OCI-LY7 (cell line): ENCODE measurements at regions of chr1 and their contacts with region 1.

Region 1: DNA sequence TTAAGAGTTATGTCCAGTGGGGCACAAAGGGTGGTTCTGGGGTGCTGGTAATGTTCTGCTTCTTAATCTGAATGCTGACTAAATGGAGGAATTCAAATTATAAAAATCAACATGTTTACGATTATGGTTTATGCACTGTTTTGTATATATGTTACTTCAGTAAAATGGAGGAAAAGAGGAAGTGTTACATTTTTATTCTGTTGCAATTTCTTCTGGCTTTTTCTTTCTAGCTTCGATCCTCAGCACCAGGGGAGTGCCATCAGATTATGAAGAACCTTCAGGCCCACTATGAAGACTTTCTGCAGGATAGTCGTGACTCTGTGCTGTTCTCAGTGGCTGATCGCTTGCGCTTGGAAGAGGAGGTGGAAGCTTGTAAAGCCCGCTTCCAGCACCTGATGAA is 105.5 kb downstream of the MACF1 start:
- DNase-seq: no peak
- H3K4me3 ChIP-seq: no peak overlapping the region
- H3K27ac ChIP-seq: no peak overlapping the region
- H3K4me1 ChIP-seq: peaks cover 7% of the 10 kb centered on the region
- CTCF ChIP-seq: no peak

Region 2: DNA sequence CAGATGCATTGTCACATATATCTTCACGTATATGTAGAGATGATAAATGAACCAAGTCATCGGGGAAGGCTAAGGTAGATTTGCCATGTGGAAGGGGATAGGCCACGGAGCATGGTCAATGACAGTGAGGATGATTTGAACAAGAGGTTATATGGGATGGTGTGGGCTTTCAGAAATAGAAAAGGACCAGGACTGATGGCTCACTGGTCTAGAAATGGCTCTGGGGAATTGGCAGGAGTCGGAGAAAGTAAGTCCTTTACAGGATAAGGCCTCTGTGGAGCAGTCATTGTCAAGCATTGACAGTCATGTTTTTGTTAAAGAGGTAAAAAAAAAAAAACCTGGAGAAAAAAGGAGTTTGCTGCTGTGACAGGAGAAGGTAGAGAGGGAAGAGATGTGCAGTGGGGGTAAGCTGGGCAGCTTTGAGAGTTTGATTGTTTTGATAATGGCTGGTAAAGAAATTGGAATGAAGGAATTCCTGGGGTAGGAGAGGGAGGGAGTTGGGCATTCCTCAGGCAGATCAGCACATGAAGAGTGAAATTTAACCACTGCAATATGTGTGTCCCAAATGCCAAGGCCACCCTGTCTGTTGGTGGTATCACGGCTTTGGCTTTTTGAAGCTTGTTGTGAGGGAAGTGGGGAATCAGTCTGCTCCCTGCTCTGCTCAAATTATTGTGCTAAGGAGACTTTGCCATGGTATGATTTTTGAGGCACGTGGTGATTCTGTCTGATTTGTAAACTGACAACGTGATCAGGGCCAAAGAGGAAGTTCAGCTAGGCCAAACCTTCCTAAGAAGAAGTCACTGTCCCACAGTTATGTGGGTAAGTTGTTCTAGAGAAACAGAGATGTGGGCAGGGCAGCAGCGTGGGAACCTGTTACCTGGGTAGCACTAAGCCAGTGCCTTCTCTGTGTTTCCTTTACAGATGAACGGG is 79.5 kb before region 1 on chr1:
- CTCF ChIA-PET with region 1: no interaction called
- POLR2A ChIA-PET with region 1: no interaction called
- intact Hi-C with region 1: no loop called
- DNase-seq: peak; percentile 29
- H3K4me3 ChIP-seq: no peak overlapping the region
- H3K27ac ChIP-seq: peak overlapping the region; percentile 21
- H3K4me1 ChIP-seq: peaks cover 19% of the 10 kb centered on the region
- CTCF ChIP-seq: no peak

Region 3: DNA sequence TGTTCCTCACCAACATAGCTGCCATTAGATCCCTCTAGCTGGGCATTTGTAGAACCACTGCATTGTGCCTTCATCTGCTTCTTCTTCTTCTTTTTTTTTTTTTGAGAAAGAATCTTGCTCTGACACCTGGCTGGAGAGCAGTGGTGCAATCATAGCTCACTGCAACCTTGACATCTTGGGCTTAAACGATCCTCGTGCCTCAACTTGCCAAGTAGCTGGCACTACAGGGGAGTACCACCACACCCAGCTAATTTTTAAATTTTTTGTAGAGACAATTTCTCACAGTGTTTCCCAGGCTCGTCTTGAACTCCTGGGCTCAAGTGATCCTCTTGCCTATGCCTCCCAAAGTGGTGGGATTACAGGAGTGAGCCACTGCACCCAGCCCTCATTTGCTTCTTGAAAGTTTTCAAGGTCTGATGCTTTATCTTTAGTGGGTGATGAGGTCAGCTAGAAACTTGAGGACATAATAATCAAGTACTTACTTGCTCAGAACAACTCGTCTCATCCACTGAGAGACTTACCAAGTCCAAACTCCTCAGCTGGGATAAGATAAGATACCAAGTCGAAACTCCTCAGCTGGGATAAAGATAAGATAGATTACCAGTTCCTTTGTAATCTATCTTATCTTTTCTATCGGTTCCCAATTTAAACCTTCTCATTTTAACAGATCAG is 34.0 kb before region 1 on chr1:
- CTCF ChIA-PET with region 1: no interaction called
- POLR2A ChIA-PET with region 1: no interaction called
- intact Hi-C with region 1: loop called (anchors 5 kb)
- DNase-seq: no peak
- H3K4me3 ChIP-seq: no peak overlapping the region
- H3K27ac ChIP-seq: no peak overlapping the region
- H3K4me1 ChIP-seq: peaks cover 26% of the 10 kb centered on the region
- CTCF ChIP-seq: no peak

Region 4: DNA sequence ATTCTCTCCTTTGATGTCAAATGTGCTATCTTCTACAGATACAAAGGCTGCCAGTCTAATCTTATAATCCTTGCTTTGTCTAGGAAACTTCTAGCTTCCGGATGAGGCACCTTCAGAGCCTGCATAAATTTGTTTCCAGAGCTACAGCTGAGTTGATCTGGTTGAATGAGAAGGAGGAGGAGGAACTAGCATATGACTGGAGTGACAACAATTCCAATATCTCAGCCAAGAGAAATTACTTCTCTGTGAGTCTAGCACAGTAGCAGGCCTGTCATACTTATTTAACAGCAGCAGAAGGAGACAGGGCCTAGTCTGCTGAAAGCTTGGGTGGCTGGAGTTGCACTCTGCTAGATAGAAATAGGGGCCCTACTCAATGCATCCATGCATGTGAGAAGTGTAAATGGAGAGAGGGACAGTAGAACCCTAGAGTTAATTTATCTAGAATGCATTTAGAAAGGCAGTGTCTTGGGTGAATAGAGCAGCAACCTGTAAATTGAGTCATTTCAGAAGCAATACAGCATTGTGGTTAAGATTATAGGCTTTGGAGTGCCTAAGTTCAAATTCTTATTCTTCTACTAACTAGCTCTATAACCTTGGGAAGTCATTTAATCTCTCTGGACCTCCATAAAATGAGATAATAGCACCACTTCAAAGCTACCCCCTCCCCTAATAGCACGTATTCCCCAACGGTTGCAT is 16.5 kb before region 1 on chr1:
- CTCF ChIA-PET with region 1: no interaction called
- POLR2A ChIA-PET with region 1: no interaction called
- intact Hi-C with region 1: no loop called
- DNase-seq: no peak
- H3K4me3 ChIP-seq: no peak overlapping the region
- H3K27ac ChIP-seq: no peak overlapping the region
- H3K4me1 ChIP-seq: no peaks in the 10 kb centered on the region
- CTCF ChIP-seq: no peak

Region 5: GRCh38 chr1:39398278-39399021 is 88.4 kb after region 1 on chr1:
- CTCF ChIA-PET with region 1: no interaction called
- POLR2A ChIA-PET with region 1: no interaction called
- intact Hi-C with region 1: no loop called
- DNase-seq: no peak
- H3K4me3 ChIP-seq: no peak overlapping the region
- H3K27ac ChIP-seq: peak overlapping the region; percentile 31
- H3K4me1 ChIP-seq: peaks cover 49% of the 10 kb centered on the region
- CTCF ChIP-seq: no peak

Region 6: GRCh38 chr1:39919545-39919944 is 609.5 kb after region 1 on chr1:
- CTCF ChIA-PET with region 1: no interaction called
- POLR2A ChIA-PET with region 1: no interaction called
- intact Hi-C with region 1: no loop called
- DNase-seq: peak; percentile 80
- H3K4me3 ChIP-seq: no peak overlapping the region
- H3K27ac ChIP-seq: no peak overlapping the region
- H3K4me1 ChIP-seq: no peaks in the 10 kb centered on the region
- CTCF ChIP-seq: peak; percentile 87